HepG2 (cell line): ENCODE measurements at regions of chr2 and their contacts with region 1.

Region 1: DNA sequence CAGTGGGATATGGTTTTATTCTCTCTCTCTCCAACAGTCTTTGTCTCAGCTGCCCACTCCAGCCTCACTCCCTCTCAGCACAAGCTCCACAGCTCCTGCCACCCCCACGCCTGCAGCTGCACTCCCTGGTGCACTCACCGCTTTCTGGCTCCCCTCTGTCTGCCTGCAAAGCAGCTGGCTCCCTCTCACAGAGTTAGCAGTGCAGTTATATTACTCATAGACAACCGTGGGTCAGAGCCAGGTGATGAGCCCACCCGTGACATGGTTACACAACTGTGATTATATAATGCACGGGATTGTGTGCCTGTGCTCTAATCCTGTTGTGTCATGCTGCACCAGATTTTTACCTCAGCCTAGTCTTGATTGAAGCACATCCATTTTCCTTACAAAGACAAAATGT is 276.9 kb upstream of the CHAC2 start:
- DNase-seq: no peak
- ATAC-seq: no peak; the same call in 2 of the 3 replicates
- H3K4me3 ChIP-seq: no peak overlapping the region
- H3K27ac ChIP-seq: no peak overlapping the region
- H3K4me1 ChIP-seq: no peaks in the 10 kb centered on the region
- H3K27me3 ChIP-seq: no peaks in the 10 kb centered on the region; a peak in 2 of 5 replicates
- CTCF ChIP-seq: no peak
- EP300 ChIP-seq: no peak
- POLR2A ChIP-seq: no peak
- RAD21 ChIP-seq: no peak

Region 2: DNA sequence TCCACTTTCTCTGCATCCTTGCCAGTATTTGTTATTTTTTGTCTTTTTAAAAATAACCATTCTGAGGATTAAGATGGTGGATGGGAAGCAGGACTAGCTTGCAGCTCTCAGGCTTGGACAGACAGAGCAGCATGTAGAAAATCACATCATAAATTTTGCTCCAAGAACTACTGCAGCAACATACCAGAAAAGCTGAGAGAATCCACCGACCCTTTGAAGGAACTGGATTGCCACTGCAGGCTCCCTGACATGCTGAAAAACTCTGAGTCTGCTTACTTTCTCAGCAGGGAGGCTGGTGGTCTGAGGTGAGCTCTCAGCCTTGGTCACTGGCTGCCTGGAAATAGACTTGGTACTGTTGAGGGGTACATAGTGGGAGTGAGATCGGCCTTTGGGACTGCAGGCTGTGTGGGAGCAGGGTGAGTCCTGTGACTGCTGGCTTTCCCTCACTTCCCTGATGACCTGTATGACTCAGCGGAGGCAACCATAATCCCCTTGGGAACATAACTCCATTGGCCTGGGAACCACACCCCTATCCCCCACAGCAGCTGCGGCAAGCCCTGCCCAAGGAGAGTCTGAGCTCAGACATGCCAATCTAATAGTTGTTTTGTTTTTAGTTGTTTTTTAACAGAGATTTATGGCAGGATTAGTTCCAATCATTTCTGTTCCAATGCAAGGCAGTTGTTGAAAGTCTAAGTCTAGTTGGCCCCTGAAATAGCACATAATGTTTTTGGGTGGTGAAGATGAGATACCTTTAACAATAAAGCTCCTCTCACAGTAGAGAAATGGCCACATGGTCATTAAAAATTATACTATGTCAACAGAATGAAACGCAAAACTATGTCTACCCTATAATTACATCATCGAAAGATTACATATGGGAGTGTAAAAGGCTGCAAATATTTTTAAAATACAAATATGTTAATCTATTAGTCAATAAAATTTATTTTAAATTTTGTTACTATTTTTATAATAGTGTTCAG is 137.2 kb before region 1 on chr2:
- CTCF ChIA-PET with region 1: no interaction called
- POLR2A ChIA-PET with region 1: no interaction called
- in situ Hi-C with region 1: no loop called
- intact Hi-C with region 1: no loop called
- DNase-seq: no peak
- ATAC-seq: no peak
- H3K4me3 ChIP-seq: no peak overlapping the region
- H3K27ac ChIP-seq: no peak overlapping the region
- H3K4me1 ChIP-seq: no peaks in the 10 kb centered on the region
- H3K27me3 ChIP-seq: no peaks in the 10 kb centered on the region; a peak in 1 of 5 replicates
- CTCF ChIP-seq: no peak
- EP300 ChIP-seq: no peak
- POLR2A ChIP-seq: no peak
- RAD21 ChIP-seq: no peak

Region 3: DNA sequence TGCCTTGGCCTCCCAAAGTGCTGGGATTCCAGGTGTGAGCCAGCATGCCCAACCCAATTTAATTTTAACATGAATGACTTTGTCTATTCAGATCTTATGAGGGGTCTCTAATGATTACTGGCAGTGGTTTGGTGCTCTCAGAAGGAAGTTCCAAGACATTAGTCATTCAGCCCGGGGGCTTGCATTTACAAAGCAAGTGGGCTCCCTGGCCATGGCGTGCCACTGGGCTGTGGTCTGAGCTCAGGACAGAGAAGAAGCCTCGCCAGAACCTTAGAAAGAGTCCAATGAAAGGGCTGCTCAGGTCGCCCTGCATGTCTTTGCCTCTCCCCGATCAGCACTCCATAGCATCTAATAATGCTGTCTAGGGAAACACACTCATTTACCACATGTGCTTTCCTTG is 94.3 kb after region 1 on chr2:
- CTCF ChIA-PET with region 1: no interaction called
- POLR2A ChIA-PET with region 1: no interaction called
- in situ Hi-C with region 1: no loop called
- intact Hi-C with region 1: loop called (anchors 5 kb)
- DNase-seq: no peak
- ATAC-seq: no peak
- H3K4me3 ChIP-seq: no peak overlapping the region
- H3K27ac ChIP-seq: no peak overlapping the region
- H3K4me1 ChIP-seq: peaks cover 10% of the 10 kb centered on the region
- H3K27me3 ChIP-seq: peaks cover 0 to 2% of the 10 kb centered on the region in 2 experiments; a peak in 1 of 5 replicates
- CTCF ChIP-seq: no peak
- EP300 ChIP-seq: no peak
- POLR2A ChIP-seq: no peak
- RAD21 ChIP-seq: no peak